A673 (cell line): ENCODE measurements at regions of chr6 and their contacts with region 1.

Region 1: DNA sequence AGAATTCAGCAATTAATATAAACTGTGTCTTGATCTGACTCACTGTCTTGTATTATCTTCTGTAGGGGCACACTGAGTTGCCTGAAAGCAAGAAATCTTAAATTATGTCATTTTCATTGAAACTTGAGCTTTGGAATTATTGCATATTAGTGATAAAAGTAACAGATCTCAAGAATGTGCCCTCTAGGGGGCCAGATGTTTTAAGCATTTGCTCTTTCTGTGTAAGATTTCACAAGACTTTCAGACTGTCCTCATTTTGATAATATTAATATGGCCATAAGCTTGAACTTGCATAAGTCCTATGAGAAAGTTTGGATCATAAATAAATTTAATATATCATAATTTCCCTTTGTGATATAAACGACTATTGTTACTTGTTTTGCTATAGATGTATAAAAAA is 55.5 kb upstream of the MYO6 start:
- DNase-seq: peak; percentile 24
- H3K4me3 ChIP-seq: no peak overlapping the region
- H3K27ac ChIP-seq: no peak overlapping the region
- H3K4me1 ChIP-seq: no peaks in the 10 kb centered on the region
- H3K27me3 ChIP-seq: no peaks in the 10 kb centered on the region
- CTCF ChIP-seq: no peak

Region 2: DNA sequence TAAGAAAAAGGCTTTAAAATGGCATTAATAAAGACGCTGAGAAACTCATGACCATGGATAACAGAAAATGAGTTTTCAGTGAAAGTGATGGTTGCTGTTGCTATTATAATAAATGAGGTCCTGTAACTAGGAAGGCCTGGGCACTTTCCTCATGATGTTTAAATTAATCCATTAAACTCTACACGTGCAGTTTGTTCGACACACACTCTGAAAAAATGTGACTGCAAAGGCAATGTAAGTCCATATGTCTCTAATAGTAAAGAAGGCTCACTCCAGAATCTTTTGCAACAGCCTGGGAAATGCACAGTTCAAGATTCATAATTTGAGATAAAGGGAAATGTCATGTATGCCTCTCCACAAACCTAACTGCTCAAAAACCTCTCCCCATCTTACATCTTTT is 641.1 kb before region 1 on chr6:
- CTCF ChIA-PET with region 1: no interaction called
- POLR2A ChIA-PET with region 1: no interaction called
- intact Hi-C with region 1: no loop called
- DNase-seq: no peak
- H3K4me3 ChIP-seq: no peak overlapping the region
- H3K27ac ChIP-seq: no peak overlapping the region
- H3K4me1 ChIP-seq: no peaks in the 10 kb centered on the region
- H3K27me3 ChIP-seq: no peaks in the 10 kb centered on the region
- CTCF ChIP-seq: no peak

Region 3: DNA sequence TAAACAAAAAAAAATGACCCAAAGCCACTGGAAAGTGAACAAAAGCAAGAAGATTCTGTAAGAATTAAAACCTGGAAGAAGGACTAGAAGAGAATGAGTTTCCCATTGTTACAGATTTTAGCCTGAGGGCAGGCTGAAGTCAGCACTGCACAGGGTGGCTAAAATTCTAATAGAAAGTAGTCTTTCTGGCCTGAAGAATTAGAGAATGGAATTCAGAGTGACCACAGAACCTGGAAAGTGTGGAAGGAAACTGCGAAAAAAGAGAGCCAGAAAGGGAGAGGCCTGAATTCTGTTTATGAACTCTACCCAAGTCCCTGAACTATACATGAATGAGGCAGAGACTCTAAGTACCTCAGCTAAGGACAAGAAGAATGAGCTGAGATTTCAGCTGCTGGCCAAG is 161.0 kb before region 1 on chr6:
- CTCF ChIA-PET with region 1: no interaction called
- POLR2A ChIA-PET with region 1: no interaction called
- intact Hi-C with region 1: no loop called
- DNase-seq: no peak
- H3K4me3 ChIP-seq: no peak overlapping the region
- H3K27ac ChIP-seq: no peak overlapping the region
- H3K4me1 ChIP-seq: no peaks in the 10 kb centered on the region
- H3K27me3 ChIP-seq: no peaks in the 10 kb centered on the region
- CTCF ChIP-seq: no peak

Region 4: DNA sequence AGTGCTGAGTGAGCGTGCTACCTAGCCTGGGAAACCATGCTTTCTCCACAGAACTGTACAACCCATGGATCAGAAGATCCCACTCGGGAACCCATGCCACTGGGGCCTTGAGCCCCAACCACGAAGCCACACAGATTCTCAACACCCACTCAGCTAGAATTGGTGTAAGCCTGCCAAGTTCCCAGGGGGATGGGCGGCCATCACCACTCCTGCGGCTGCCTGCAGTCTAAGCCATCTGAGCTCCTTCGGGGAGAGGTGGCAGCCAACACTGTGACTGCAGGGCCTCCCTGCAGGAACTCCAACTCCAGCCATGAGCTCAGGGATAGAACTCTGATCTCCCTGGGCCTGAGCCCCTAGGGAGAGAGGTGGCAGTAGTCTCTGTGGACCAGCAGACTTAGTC is 125.4 kb before region 1 on chr6:
- CTCF ChIA-PET with region 1: no interaction called
- POLR2A ChIA-PET with region 1: no interaction called
- intact Hi-C with region 1: no loop called
- DNase-seq: no peak
- H3K4me3 ChIP-seq: no peak overlapping the region
- H3K27ac ChIP-seq: no peak overlapping the region
- H3K4me1 ChIP-seq: no peaks in the 10 kb centered on the region
- H3K27me3 ChIP-seq: no peaks in the 10 kb centered on the region
- CTCF ChIP-seq: no peak

Region 5: DNA sequence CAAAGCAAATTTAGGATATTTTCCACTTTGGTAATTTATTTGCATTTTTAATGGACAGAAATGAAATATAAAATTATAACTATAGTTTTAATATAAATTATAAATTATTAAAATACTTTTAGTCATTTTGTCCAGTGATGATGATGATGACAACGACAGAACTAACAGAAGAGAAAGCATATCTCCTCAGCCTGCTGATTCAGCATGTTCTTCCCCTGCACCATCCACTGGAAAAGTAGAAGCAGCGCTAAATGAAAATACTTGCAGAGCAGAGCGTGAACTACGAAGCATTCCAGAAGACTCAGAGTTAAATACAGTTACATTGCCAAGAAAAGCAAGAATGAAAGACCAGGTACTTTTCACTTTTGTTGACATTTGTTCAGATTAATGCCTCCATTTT is 27.0 kb before region 1 on chr6:
- CTCF ChIA-PET with region 1: interaction called, 10 read pairs
- POLR2A ChIA-PET with region 1: no interaction called
- intact Hi-C with region 1: no loop called
- DNase-seq: no peak
- H3K4me3 ChIP-seq: no peak overlapping the region
- H3K27ac ChIP-seq: no peak overlapping the region
- H3K4me1 ChIP-seq: no peaks in the 10 kb centered on the region
- H3K27me3 ChIP-seq: no peaks in the 10 kb centered on the region
- CTCF ChIP-seq: no peak

Region 6: DNA sequence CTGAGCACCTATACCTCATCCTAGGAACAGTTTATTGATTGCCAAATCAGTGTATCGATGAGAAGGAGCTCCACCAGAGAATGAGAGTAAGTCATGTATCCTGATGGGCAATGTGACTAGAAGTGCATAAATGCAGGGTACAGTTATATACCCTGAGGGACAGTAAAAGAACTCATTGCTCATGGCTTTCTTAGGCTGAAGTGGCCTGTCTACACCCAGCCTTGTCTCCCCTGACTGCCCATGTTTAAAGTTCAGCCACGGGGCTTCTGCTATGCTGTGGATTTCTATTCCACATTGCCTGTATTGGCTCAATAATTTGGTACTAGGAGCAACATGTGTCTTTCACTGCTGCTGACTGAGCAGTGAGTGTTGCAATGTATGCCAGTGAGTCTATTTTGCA is 779.3 kb after region 1 on chr6:
- CTCF ChIA-PET with region 1: no interaction called
- POLR2A ChIA-PET with region 1: no interaction called
- intact Hi-C with region 1: no loop called
- DNase-seq: no peak
- H3K4me3 ChIP-seq: no peak overlapping the region
- H3K27ac ChIP-seq: no peak overlapping the region
- H3K4me1 ChIP-seq: no peaks in the 10 kb centered on the region
- H3K27me3 ChIP-seq: no peaks in the 10 kb centered on the region
- CTCF ChIP-seq: no peak